K562 (cell line): ENCODE measurements at regions of chr17 and their contacts with region 1.

Region 1: DNA sequence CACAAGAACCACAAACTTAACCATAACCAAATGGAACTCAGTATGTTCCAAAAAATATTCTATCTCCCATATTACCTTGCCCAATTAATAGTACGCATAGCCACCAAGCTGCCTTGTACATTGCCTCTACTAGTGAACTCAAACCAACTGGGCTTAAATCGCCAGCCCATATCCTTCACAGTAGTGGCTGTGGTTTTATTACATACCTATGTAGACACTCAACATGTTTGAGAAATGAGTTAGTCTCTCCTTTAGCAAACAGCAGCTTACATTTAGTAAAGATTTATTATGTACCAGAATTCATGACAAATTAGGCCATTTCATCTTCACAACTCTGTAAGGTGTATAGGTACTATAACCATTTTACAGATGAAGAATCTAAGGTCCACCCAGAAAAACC is 41.4 kb downstream of the GRB2 start:
- DNase-seq: no peak
- ATAC-seq: no peak
- H3K4me3 ChIP-seq: no peak overlapping the region
- H3K27ac ChIP-seq: no peak overlapping the region
- H3K4me1 ChIP-seq: peaks cover 23 to 62% of the 10 kb centered on the region in 2 experiments
- H3K27me3 ChIP-seq: no peaks in the 10 kb centered on the region
- CTCF ChIP-seq: no peak
- EP300 ChIP-seq: no peak
- POLR2A ChIP-seq: no peak
- RAD21 ChIP-seq: no peak

Region 2: DNA sequence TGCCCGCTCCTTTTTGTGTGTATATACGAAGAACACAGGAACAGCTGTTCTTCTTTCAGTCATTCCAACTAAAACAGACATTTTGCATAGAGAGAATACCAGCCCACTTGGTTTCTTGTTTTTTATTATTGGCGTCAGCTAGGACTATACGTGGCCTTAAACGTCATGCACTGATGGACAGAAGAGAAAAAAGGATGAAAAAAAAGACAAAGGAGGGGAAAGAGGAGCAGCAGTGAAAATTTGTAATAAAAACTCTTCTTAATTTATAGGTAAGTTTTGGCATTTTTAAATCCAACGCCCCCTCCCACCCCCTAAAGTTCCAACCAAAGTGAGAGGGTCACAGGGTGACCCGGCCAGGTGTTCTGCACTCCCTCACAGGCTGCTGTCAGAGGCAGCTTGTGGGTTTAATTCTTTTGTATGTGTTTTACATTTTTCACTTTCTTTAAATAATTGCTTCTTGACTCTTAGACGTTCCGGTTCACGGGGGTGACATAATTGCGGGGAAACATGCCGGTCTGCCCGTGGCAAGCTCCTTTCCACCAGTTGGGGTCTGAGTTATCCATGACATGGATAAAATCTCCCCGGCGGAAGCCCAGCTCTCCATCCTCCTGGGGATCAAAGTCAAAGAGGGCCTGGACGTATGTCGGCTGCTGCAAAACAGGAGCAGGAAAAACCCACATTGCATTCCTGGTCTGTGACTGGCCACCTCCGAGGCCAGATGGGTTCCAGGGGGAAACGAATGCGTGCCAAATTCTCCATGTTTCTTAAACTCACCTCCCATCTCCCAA is 44.0 kb before region 1 on chr17:
- CTCF ChIA-PET with region 1: no interaction called
- POLR2A ChIA-PET with region 1: no interaction called
- in situ Hi-C with region 1: no loop called
- intact Hi-C with region 1: loop called (anchors 1 kb)
- DNase-seq: no peak
- ATAC-seq: no peak
- H3K4me3 ChIP-seq: no peak overlapping the region
- H3K27ac ChIP-seq: no peak overlapping the region
- H3K4me1 ChIP-seq: peaks cover 4 to 15% of the 10 kb centered on the region in 2 experiments; a peak in 4 of 5 replicates
- H3K27me3 ChIP-seq: no peaks in the 10 kb centered on the region
- CTCF ChIP-seq: no peak
- EP300 ChIP-seq: no peak
- POLR2A ChIP-seq: no peak
- RAD21 ChIP-seq: no peak

Region 3: DNA sequence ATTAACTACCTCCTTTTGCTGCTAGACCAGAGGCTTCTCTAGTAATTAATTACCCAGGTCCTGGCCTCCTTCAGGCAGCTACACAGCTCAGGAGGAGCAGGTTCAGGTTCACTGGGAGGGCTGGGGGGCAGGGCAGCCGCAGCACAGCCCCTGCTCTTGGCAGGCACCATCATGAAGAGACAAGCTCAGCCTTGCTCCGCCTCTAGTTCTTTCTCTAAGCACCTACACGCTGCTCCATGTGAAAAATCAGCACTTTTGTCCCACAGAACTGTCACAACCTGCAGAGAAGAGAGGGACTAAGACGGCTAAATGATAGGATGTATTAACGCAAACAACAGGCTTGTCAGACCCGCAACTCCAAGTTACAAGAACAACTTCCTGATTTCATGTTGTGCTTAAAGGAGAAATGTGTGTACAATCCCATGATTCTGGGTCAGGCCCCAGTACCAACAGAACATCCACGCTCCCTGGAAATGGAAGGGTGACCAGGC is 12.0 kb before region 1 on chr17:
- CTCF ChIA-PET with region 1: no interaction called
- POLR2A ChIA-PET with region 1: interaction called, 15 read pairs
- in situ Hi-C with region 1: no loop called
- intact Hi-C with region 1: no loop called
- DNase-seq: peak in 2 of 4 experiments; percentile 43 to 74
- ATAC-seq: peak; percentile 88
- H3K4me3 ChIP-seq: no peak overlapping the region
- H3K27ac ChIP-seq: peak overlapping the region; percentile 59
- H3K4me1 ChIP-seq: peaks cover 28 to 45% of the 10 kb centered on the region in 2 experiments
- H3K27me3 ChIP-seq: no peaks in the 10 kb centered on the region
- CTCF ChIP-seq: no peak
- EP300 ChIP-seq: no peak
- POLR2A ChIP-seq: no peak
- RAD21 ChIP-seq: no peak

Region 4: GRCh38 chr17:75380315-75380714 is 16.2 kb after region 1 on chr17:
- CTCF ChIA-PET with region 1: no interaction called
- POLR2A ChIA-PET with region 1: interaction called, 11 read pairs
- in situ Hi-C with region 1: no loop called
- intact Hi-C with region 1: no loop called
- DNase-seq: no peak
- ATAC-seq: no peak
- H3K4me3 ChIP-seq: no peak overlapping the region
- H3K27ac ChIP-seq: no peak overlapping the region
- H3K4me1 ChIP-seq: peaks cover 4 to 9% of the 10 kb centered on the region in 2 experiments; a peak in 3 of 5 replicates
- H3K27me3 ChIP-seq: no peaks in the 10 kb centered on the region
- CTCF ChIP-seq: no peak
- EP300 ChIP-seq: no peak
- POLR2A ChIP-seq: no peak
- RAD21 ChIP-seq: no peak

Region 5: DNA sequence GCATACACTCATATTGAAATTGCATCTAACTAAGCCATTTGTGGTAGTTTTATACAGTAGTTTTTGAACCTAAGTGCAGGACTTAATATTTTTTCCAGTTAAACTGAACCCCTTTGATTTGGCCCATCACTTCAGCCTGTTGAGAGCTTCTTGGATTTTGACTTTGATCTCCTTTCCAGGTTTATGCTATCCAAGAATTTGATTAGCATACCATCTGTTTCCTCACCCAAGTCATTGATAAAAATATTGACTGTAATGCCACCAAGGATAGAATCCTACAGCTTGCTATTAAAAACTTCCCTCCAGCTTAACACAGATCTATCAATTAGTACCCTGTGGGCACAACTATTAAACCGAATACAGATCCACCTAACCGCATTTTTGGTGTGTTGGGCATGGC is 99.5 kb after region 1 on chr17:
- CTCF ChIA-PET with region 1: no interaction called
- POLR2A ChIA-PET with region 1: no interaction called
- in situ Hi-C with region 1: no loop called
- intact Hi-C with region 1: no loop called
- DNase-seq: no peak
- ATAC-seq: no peak
- H3K4me3 ChIP-seq: no peak overlapping the region
- H3K27ac ChIP-seq: no peak overlapping the region
- H3K4me1 ChIP-seq: peaks cover 3 to 11% of the 10 kb centered on the region in 2 experiments; a peak in 4 of 5 replicates
- H3K27me3 ChIP-seq: no peaks in the 10 kb centered on the region
- CTCF ChIP-seq: no peak
- EP300 ChIP-seq: no peak
- POLR2A ChIP-seq: no peak
- RAD21 ChIP-seq: no peak